ENCODE measurements at regions of chr9 and their contacts with region 1.

Region 1: GRCh38 chr9:32550562-32551433 is 1.3 kb upstream of the SMIM27 start:
- DNase-seq: peak; percentile 98
- H3K4me3 ChIP-seq: peak overlapping the region; percentile 69 to 86 (median 78)
- H3K27ac ChIP-seq: peak overlapping the region; percentile 90 to 96 (median 92)
- H3K4me1 ChIP-seq: peaks cover 29 to 47% (median 35%) of the 10 kb centered on the region in 4 donors
- H3K27me3 ChIP-seq: no peaks in the 10 kb centered on the region
- CTCF ChIP-seq: peak in 1 of 3 experiments; percentile 13
- EP300 ChIP-seq: no peak
- POLR2A ChIP-seq: no peak

Region 2: GRCh38 chr9:32384364-32385151 is 166.2 kb before region 1 on chr9 and contains the start of gene ACO1:
- intact Hi-C with region 1: loop called (anchors 5 kb)
- DNase-seq: peak; percentile 93
- H3K4me3 ChIP-seq: peak within 1 kb of the TSS; percentile 76 to 82 (median 80)
- H3K27ac ChIP-seq: peak within 1 kb of the TSS; percentile 86 to 90 (median 90)
- H3K4me1 ChIP-seq: peaks cover 32 to 56% (median 53%) of the 10 kb centered on the region in 4 donors
- H3K27me3 ChIP-seq: no peaks in the 10 kb centered on the region
- CTCF ChIP-seq: peak in 2 of 3 experiments; percentile 13 to 27
- EP300 ChIP-seq: no peak
- POLR2A ChIP-seq: peak; percentile 42
- total RNA-seq, gene ACO1: 64.4 to 91.9 (median 86.5) TPM

Region 3: GRCh38 chr9:32487981-32488380 is 62.8 kb before region 1 on chr9:
- intact Hi-C with region 1: no loop called
- DNase-seq: no peak
- H3K4me3 ChIP-seq: no peak overlapping the region
- H3K27ac ChIP-seq: no peak overlapping the region
- H3K4me1 ChIP-seq: no peaks in the 10 kb centered on the region
- H3K27me3 ChIP-seq: no peaks in the 10 kb centered on the region
- CTCF ChIP-seq: no peak
- EP300 ChIP-seq: no peak
- POLR2A ChIP-seq: no peak

Region 4: DNA sequence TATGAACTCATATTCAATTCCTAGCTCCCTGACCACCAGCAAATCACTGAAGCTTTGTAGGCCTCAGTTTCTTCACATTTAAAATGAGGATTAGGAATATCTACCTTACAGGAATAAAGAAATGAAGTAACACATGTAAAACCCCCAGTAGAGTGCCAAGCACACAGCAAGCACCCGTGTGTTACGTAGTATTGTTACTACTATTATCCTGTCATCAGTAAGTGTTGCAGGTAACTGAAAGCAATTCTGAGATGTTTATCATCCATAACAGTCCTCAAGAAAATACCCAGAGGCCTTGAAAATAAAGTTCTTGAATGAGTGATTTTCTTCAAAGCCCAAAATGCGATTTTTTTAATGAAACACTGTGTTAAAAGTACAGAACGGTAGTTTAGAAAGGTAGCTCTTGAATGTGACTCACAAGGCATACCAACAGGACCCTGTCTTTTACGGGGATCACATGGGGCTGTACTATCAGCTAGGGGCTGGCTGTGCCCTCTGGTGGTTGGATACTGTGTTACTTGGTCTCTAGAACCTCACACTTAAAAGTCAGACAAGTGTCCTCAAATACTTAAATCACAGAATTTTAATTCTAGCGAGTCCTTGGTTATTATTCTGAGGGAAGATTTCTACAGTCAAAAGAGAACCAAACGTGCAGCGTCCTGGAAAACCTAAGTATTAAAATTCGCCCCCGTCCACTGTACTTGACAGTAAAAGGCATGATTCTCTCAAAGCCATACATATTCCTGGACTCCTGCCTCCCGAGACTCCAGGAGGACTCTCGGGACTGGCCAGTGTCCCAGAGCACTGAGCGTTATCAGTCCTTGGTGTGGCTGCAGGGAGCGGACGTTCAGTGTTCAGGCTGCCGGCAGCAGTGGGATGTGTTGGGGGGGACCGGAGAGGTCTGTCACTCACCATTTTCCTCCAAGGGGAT is 21.4 kb after region 1 on chr9:
- intact Hi-C with region 1: loop called (anchors 2 kb)
- DNase-seq: no peak
- H3K4me3 ChIP-seq: peak overlapping the region; percentile 79 to 83 (median 83)
- H3K27ac ChIP-seq: peak overlapping the region; percentile 90 to 93 (median 91)
- H3K4me1 ChIP-seq: peaks cover 24 to 39% (median 30%) of the 10 kb centered on the region in 4 donors
- H3K27me3 ChIP-seq: no peaks in the 10 kb centered on the region
- CTCF ChIP-seq: peak; percentile 47 to 60 (median 48)
- EP300 ChIP-seq: no peak
- POLR2A ChIP-seq: no peak